Right lobe of liver (tissue), 6 donors: ENCODE measurements at regions of chr16 and their contacts with region 1.

Region 1: DNA sequence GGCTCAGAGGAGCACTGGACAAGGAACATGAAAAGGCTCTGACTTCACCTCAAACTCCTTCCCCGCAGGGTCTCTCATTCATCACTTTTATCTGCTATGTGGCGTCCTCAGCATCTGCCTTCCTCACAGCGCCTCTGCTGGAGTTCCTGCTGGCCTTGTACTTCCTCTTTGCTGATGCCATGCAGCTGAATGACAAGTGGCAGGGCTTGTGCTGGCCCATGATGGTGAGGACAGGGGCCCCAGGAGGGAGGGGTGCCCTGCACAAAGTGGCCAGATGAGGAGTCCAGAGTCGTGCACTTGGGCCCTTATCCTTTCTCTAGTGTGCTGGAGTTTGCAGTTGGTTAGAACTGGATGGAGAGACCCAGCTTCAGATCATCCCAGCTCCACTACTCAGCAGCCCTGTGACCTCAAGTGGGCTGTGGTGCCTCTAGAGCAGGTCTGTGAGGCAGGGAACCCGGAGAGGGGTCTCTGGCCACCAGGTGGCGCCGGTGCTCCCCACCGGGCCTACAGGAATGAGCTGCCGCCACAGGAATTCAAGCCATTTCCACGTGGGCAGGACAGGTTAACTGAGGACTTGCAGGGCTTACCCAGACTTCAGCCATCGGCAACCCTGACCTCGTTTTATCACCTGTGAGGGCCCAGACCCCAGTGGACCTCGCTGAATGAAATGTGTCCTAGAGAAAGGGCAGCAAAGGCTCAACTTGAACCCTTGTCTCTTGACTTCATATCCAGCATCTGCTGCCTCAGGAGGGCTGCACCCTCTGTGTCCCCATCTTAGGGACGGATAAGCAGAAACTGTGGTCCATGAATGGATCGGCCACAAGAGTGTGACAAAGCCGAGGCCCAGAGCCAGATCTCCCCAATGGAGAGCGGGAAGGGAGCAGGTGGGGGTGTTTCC is 4.0 kb downstream of the CMTM3 start:
- DNase-seq: peak; percentile 88 to 90 (median 88)
- ATAC-seq: peak; percentile 84 to 85 (median 84)
- H3K4me3 ChIP-seq: no peak overlapping the region
- H3K27ac ChIP-seq: no peak overlapping the region
- H3K4me1 ChIP-seq: peaks cover 0 to 4% (median 2%) of the 10 kb centered on the region in 4 donors
- H3K27me3 ChIP-seq: no peaks in the 10 kb centered on the region
- CTCF ChIP-seq: peak; percentile 85 to 93 (median 91)
- POLR2A ChIP-seq: no peak

Region 2: DNA sequence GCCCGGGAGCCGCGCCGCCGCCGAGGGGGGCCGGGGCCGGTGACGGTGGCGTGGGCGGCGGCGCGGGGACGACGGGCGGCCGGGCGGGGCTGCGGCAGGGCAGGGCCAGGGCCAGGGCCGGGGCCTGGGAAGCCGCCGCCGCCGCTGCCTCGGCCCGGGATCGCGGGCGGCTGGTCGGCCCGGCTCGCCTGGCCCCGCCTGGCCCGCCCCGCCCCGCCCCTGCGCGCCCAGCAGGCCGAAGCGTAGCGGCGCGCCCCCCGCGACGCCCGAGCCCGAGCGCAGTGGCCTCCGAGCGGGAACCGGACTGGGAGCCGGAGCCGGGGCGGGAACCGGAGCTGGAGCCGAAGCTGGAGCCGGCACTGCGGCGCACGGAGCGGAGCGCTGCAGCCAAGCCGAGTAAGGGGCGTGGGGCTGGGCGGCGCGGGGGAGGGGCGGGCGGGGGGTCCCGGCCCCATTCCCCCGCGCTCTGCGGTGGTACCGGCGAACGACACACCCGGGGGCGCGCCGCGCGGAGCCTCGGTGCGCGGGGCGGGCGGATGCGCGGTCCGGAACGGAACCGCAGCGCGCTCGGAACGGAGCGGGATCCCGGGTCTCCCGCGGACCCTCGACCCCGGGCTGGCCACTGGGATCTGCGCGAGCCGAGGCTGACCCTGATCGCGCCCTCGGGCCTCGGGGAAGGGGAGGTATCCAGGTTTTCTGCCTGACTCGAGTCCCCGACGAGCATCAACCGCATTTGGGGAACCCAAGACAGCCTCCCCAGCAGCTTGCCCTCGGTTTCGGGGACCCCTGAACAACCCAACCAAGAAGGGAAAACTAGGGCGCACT is 181.2 kb before region 1 on chr16 and contains the start of gene BEAN1:
- intact Hi-C with region 1: loop called in 1 of 2 experiments (anchors 10 kb)
- DNase-seq: no peak
- ATAC-seq: peak; percentile 65 to 74 (median 66)
- H3K4me3 ChIP-seq: peak within 1 kb of the TSS; percentile 20 to 45 (median 35)
- H3K27ac ChIP-seq: no peak within 1 kb of the TSS
- H3K4me1 ChIP-seq: peaks cover 0 to 3% (median 0%) of the 10 kb centered on the region in 4 donors
- H3K27me3 ChIP-seq: peaks cover 0 to 14% of the 10 kb centered on the region in 2 donors
- CTCF ChIP-seq: no peak
- POLR2A ChIP-seq: no peak
- total RNA-seq, gene BEAN1: 0.09 to 0.26 (median 0.10) TPM in 3 of 6 experiments, not detected in the others

Region 3: DNA sequence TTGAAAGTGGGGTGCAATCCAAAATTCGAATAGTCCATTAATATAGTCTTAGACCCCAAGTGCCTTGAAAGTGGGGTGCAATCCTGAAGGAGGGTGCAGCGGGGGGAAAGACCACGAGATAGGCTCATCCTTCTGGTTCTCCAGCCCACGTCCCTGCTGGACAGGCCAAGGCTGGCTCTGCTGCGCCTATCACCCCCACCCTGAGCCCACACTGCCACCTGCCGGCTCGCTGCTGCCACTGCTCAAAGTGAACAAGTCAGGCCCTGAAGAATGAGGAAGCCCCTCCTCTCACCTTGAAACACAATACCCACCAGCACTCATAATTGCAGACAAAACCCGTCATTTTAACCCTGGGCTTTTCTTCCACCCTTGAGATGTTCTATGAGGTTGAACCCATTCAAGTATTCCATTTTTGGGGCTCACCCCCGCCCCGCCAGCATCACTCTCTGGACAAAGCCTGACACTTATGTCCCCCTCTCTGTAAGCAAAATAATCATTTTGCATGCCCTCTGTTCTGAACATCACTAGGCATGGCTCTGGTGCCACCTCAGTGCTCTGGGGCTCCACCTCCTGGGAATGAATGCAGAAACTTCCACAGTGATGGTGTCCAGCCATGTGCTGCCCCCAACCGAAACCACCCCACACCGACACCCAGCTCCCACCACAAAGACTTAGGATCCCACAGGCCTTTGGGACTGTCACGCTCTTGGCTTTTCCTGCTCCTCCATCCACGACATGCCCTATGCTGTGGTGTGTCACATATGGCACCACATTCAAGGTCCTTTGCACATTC is 124.6 kb before region 1 on chr16:
- intact Hi-C with region 1: loop called in 1 of 2 experiments (anchors 10 kb)
- DNase-seq: peak; percentile 79 to 83 (median 82)
- ATAC-seq: peak; percentile 79 to 84 (median 82)
- H3K4me3 ChIP-seq: no peak overlapping the region
- H3K27ac ChIP-seq: no peak overlapping the region
- H3K4me1 ChIP-seq: no peaks in the 10 kb centered on the region
- H3K27me3 ChIP-seq: no peaks in the 10 kb centered on the region
- CTCF ChIP-seq: peak; percentile 82 to 91 (median 90)
- POLR2A ChIP-seq: no peak